ENCODE measurements at regions of chr7 and their contacts with region 1.

Region 1: GRCh38 chr7:30173058-30173897 is 38.5 kb downstream of the MTURN start:
- DNase-seq: peak; percentile 98
- H3K4me3 Mint-ChIP-seq: no peak overlapping the region
- H3K27ac Mint-ChIP-seq: peak overlapping the region; percentile 83
- H3K4me1 Mint-ChIP-seq: peaks cover 23% of the 10 kb centered on the region
- H3K27me3 Mint-ChIP-seq: no peaks in the 10 kb centered on the region
- CTCF ChIP-seq: peak; percentile 45

Region 2: GRCh38 chr7:29865526-29865925 is 307.8 kb before region 1 on chr7:
- CTCF ChIA-PET with region 1: no interaction called
- POLR2A ChIA-PET with region 1: no interaction called
- intact Hi-C with region 1: no loop called
- DNase-seq: peak; percentile 94
- H3K4me3 Mint-ChIP-seq: no peak overlapping the region
- H3K27ac Mint-ChIP-seq: no peak overlapping the region
- H3K4me1 Mint-ChIP-seq: peaks cover 7% of the 10 kb centered on the region
- H3K27me3 Mint-ChIP-seq: no peaks in the 10 kb centered on the region
- CTCF ChIP-seq: no peak

Region 3: DNA sequence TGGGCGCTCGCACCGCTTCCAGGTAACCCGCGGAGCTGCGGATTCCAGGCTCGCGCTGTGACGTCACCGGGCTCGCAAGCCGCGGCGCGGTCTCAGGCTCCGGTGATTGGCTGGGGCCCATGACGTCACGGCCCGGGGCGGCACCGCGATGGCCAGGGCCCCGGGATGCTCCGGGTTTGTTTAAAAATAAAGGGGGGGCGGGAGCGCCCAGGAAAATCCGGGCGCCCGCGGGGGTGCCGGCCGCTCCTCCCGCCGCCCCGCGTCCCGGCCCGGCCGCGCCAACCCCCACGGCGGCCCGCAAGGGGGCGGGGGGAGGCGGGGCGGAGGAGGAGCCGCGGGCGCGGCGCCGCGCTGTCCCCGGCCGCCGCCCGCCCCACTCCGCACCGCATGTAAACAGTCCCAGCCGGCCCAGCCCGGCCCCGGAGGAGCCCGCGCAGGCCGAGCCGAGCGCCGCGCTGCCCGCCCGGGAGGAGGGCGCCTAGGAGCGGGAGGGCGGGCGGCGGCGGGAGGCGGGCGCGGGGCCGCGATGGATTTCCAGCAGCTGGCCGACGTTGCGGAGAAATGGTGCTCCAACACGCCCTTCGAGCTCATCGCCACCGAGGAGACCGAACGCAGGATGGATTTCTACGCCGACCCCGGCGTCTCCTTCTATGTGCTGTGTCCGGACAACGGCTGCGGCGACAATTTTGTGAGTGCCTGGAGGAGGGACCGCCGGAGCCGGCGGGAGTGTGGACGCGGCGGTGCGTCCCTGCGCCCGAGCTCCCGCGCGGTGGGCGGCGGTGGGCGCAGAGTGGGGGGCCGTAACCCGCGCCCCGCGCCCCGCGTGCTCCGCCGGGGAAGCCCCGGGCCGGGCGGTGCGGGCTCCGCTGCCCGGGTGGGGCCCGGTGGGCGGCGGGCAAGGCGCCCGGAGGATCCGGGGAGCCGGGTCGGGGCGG is 38.4 kb before region 1 on chr7 and contains the start of gene MTURN:
- CTCF ChIA-PET with region 1: no interaction called
- POLR2A ChIA-PET with region 1: interaction called, 8 read pairs
- intact Hi-C with region 1: loop called (anchors 2 kb)
- DNase-seq: peak; percentile 75
- H3K4me3 Mint-ChIP-seq: peak within 1 kb of the TSS; percentile 92
- H3K27ac Mint-ChIP-seq: peak within 1 kb of the TSS; percentile 27
- H3K4me1 Mint-ChIP-seq: no peaks in the 10 kb centered on the region
- H3K27me3 Mint-ChIP-seq: no peaks in the 10 kb centered on the region
- CTCF ChIP-seq: no peak
- total RNA-seq, gene MTURN: 7.5 and 10.5 TPM in 2 replicates

Region 4: DNA sequence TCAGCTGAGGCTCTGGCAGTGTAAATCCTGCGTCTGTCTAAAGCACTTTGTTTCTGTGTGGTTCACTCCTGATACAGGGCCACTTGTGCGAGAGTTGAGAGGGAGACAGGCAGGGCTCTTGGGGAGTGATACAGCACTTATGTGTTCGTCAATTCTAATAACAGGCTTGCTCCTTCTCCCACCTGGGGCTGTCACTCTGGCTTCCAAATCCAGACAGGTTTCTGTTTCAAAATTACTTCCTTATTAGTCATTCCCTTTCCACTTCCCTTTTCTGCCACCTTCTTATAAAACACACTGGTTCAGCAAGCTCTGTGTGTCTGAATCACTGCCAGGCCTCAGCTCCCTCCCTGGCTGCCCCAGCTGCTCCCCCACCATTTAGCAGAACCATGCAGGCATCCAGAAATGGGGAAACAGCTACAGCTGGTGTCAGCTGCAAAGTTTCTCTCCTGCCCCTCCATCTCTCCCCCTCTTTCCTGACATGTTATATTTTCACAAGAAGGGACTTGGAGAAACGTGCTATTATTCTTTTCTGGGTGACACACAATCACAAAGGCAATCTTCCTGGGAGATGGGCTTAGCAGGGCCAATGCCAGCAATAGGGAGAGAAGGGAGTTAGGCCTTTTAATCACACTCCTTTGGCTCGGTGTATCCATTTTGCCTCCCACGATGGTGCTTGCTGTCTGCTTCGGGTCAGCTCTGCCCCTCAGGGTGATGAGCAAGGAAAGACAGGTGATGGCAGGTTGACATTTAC is 52.8 kb after region 1 on chr7:
- CTCF ChIA-PET with region 1: interaction called, 3 read pairs
- POLR2A ChIA-PET with region 1: interaction called, 7 read pairs
- intact Hi-C with region 1: loop called (anchors 5 kb)
- DNase-seq: peak; percentile 86
- H3K4me3 Mint-ChIP-seq: no peak overlapping the region
- H3K27ac Mint-ChIP-seq: peak overlapping the region; percentile 54
- H3K4me1 Mint-ChIP-seq: peaks cover 32% of the 10 kb centered on the region
- H3K27me3 Mint-ChIP-seq: no peaks in the 10 kb centered on the region
- CTCF ChIP-seq: no peak

Region 5: DNA sequence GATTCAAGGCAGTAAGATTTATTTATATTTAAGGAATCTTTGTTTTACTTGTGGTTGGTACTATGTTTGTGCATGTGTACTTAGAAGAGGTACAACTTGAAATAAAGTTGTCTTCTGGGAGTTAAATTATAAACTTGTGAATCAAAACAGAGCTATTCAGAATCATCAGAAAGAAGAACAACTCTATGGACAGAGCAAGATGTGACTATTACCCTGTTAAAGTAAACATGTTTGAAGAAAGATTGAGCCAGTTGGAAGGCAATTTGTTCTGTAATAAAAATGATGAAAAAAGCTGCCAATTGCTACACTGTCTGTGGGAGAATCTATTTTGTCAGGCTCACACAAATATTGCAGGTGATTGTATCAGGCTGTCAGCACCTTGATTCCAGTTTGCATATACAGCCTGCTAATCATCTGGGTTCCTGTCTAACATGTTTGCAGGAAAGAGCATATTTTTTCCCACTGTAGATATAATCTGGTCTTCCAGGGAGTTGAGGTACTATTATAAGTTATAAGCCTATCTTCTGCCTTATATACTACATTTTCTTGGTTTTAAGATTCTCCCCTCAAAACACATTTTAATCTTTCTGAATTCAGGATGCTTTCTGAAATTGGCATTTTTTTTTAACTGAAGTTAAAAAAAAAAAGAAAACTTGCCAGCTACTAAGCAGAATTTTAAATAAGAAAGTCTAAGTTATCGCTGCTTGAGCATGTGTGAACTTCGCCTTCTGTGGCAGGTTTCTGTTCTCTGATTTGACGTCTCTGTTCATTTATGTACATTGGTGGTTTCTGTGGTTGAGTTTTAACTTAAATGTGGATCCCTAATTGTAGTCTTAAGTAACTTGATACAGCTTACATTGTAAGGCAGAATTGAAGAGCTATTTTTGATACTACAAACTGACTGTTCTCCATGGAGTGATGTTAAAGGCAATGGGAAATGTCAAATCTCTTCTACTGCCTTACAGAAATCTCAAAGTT is 157.1 kb after region 1 on chr7:
- CTCF ChIA-PET with region 1: no interaction called
- POLR2A ChIA-PET with region 1: no interaction called
- intact Hi-C with region 1: no loop called
- DNase-seq: no peak
- H3K4me3 Mint-ChIP-seq: no peak overlapping the region
- H3K27ac Mint-ChIP-seq: no peak overlapping the region
- H3K4me1 Mint-ChIP-seq: peaks cover 32% of the 10 kb centered on the region
- H3K27me3 Mint-ChIP-seq: no peaks in the 10 kb centered on the region
- CTCF ChIP-seq: no peak

Region 6: DNA sequence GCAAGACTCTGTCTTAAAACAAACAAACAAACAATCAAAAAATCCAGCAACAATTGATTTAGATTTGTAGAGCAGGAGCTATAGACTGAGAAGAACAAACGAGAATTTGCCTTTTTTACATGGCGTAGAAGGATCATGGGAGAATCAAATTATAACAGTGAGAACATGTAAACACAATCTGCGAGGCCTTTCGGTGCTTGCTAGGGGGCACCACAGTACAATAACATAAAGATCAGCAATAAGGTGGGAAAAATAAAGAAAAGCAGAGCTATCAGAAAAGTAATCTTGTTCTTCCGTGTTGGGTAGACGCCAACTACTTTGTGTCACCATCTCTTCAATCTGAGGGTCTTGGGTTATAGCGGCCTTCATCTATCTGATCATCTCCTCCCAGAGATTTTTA is 223.1 kb after region 1 on chr7:
- CTCF ChIA-PET with region 1: no interaction called
- POLR2A ChIA-PET with region 1: no interaction called
- intact Hi-C with region 1: no loop called
- DNase-seq: peak; percentile 5
- H3K4me3 Mint-ChIP-seq: no peak overlapping the region
- H3K27ac Mint-ChIP-seq: no peak overlapping the region
- H3K4me1 Mint-ChIP-seq: peaks cover 5% of the 10 kb centered on the region
- H3K27me3 Mint-ChIP-seq: no peaks in the 10 kb centered on the region
- CTCF ChIP-seq: no peak